ENCODE measurements at regions of chr11 and their contacts with region 1.

Region 1: GRCh38 chr11:83819933-83820549 is 533.9 kb upstream of the CCDC90B start:
- DNase-seq: peak; percentile 35
- ATAC-seq: peak; percentile 63; the same call in 1 of the 2 replicates
- H3K4me3 ChIP-seq: no peak overlapping the region
- H3K27ac ChIP-seq: no peak overlapping the region
- H3K4me1 ChIP-seq: peaks cover 0 to 4% of the 10 kb centered on the region in 2 experiments; a peak in 1 of 4 replicates
- H3K27me3 ChIP-seq: peaks cover 16% of the 10 kb centered on the region
- CTCF ChIP-seq: peak in 2 of 3 experiments; percentile 58 to 66; a peak in 4 of 6 replicates
- POLR2A ChIP-seq: no peak
- RAD21 ChIP-seq: peak; percentile 79

Region 2: DNA sequence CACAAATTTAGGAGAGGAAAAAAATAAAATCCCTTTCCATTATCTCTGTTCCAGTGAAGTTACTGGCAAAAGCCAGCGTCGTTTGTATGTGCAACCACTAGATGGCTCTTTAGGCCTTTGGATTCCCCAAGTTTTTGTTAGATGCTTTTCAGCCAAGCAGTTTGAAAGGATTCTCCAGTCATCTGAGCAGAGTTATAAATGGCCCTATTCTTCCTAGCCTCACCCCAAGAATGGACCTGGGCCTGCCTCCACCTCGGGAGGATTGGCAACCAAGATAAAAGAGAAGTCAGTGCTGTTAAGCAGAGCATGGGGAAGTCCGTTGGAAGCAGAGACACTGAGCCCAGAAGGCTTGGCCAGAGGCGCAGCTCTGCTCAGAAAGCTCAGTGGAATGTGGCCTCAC is 1101.7 kb before region 1 on chr11:
- CTCF ChIA-PET with region 1: interaction called, 8 read pairs
- POLR2A ChIA-PET with region 1: no interaction called
- RAD21 ChIA-PET with region 1: no interaction called
- intact Hi-C with region 1: loop called (anchors 2 kb)
- DNase-seq: peak; percentile 19
- ATAC-seq: peak; percentile 85
- H3K4me3 ChIP-seq: no peak overlapping the region
- H3K27ac ChIP-seq: no peak overlapping the region
- H3K4me1 ChIP-seq: no peaks in the 10 kb centered on the region
- H3K27me3 ChIP-seq: peaks cover 23% of the 10 kb centered on the region
- CTCF ChIP-seq: peak; percentile 58 to 74 (median 73); a peak in 5 of 6 replicates
- POLR2A ChIP-seq: no peak
- RAD21 ChIP-seq: peak; percentile 71

Region 3: GRCh38 chr11:82775736-82776346 is 1044.2 kb before region 1 on chr11:
- CTCF ChIA-PET with region 1: interaction called, 3 read pairs
- POLR2A ChIA-PET with region 1: no interaction called
- RAD21 ChIA-PET with region 1: no interaction called
- intact Hi-C with region 1: loop called (anchors 5 kb)
- DNase-seq: peak; percentile 36
- ATAC-seq: peak; percentile 100
- H3K4me3 ChIP-seq: peak overlapping the region in 1 of 2 experiments; percentile 2; a peak in 1 of 4 replicates
- H3K27ac ChIP-seq: no peak overlapping the region
- H3K4me1 ChIP-seq: no peaks in the 10 kb centered on the region
- H3K27me3 ChIP-seq: peaks cover 5% of the 10 kb centered on the region; the same call in 1 of the 2 replicates
- CTCF ChIP-seq: peak; percentile 71 to 95 (median 89); a peak in 5 of 6 replicates
- POLR2A ChIP-seq: no peak
- RAD21 ChIP-seq: peak; percentile 65

Region 4: DNA sequence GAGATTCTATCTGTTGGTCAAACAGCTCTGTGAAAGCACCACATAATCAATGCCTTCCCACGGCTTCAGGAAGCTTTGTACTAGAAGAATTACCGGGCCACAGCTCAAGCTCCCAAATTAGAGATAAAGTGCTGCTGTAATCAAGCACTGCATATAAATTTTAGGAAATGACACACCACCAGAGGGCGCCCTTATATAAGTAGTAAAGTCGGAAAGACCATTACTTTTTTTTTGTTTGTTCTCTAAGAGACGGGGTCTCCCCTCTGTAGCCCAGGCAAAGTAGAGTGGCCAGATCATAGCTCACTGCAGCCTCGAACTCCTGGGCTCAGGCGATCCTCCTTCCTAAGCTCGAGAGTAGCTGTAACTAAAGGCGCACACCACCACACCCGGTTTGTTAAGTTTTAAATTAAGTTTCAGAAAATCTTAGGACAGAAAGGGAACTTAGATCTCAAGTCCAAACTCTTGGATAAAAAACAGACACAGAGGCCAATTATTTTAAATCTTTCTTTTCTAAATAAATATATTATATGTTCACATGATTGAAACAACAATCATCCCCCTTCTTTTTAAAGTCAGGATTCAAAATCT is 952.5 kb before region 1 on chr11:
- CTCF ChIA-PET with region 1: interaction called, 7 read pairs
- POLR2A ChIA-PET with region 1: no interaction called
- RAD21 ChIA-PET with region 1: no interaction called
- intact Hi-C with region 1: loop called (anchors 2 kb)
- DNase-seq: peak; percentile 64
- ATAC-seq: peak; percentile 63
- H3K4me3 ChIP-seq: no peak overlapping the region
- H3K27ac ChIP-seq: no peak overlapping the region
- H3K4me1 ChIP-seq: peaks cover 0 to 3% of the 10 kb centered on the region in 2 experiments; a peak in 1 of 4 replicates
- H3K27me3 ChIP-seq: no peaks in the 10 kb centered on the region
- CTCF ChIP-seq: peak; percentile 55 to 80 (median 63); a peak in 5 of 6 replicates
- POLR2A ChIP-seq: no peak
- RAD21 ChIP-seq: peak; percentile 82

Region 5: DNA sequence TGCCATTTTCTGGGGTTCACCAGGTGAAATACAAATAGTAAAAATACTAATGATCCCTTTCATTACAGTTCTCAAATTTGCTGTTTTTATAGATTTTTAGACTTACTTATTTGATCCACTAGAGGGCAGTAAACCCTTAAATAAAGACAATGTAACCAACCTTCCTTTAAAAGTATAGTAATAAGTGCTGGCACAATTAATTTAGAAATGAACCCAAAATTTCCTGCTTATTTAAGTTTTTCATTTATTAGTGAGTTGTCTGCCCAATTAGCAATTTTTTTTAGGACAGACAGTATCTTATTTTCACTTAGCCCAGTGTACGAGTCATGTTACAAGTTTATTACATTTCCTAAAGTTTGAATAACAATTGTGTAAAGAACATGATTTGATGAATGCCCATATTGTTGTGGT is 913.8 kb before region 1 on chr11:
- CTCF ChIA-PET with region 1: no interaction called
- POLR2A ChIA-PET with region 1: no interaction called
- RAD21 ChIA-PET with region 1: no interaction called
- intact Hi-C with region 1: loop called (anchors 2 kb)
- DNase-seq: peak; percentile 15
- ATAC-seq: no peak
- H3K4me3 ChIP-seq: no peak overlapping the region
- H3K27ac ChIP-seq: no peak overlapping the region
- H3K4me1 ChIP-seq: peaks cover 6 to 10% of the 10 kb centered on the region in 2 experiments; a peak in 3 of 4 replicates
- H3K27me3 ChIP-seq: no peaks in the 10 kb centered on the region
- CTCF ChIP-seq: peak; percentile 32 to 71 (median 50); a peak in 4 of 6 replicates
- POLR2A ChIP-seq: no peak
- RAD21 ChIP-seq: peak; percentile 65

Region 6: GRCh38 chr11:83241291-83241946 is 578.6 kb before region 1 on chr11:
- CTCF ChIA-PET with region 1: interaction called, 3 read pairs
- POLR2A ChIA-PET with region 1: no interaction called
- RAD21 ChIA-PET with region 1: no interaction called
- intact Hi-C with region 1: loop called (anchors 5 kb)
- DNase-seq: peak; percentile 69
- ATAC-seq: peak; percentile 98
- H3K4me3 ChIP-seq: no peak overlapping the region
- H3K27ac ChIP-seq: no peak overlapping the region
- H3K4me1 ChIP-seq: no peaks in the 10 kb centered on the region
- H3K27me3 ChIP-seq: no peaks in the 10 kb centered on the region
- CTCF ChIP-seq: peak; percentile 52 to 73 (median 61)
- POLR2A ChIP-seq: no peak
- RAD21 ChIP-seq: peak; percentile 55; the same call in 1 of the 2 replicates

Region 7: DNA sequence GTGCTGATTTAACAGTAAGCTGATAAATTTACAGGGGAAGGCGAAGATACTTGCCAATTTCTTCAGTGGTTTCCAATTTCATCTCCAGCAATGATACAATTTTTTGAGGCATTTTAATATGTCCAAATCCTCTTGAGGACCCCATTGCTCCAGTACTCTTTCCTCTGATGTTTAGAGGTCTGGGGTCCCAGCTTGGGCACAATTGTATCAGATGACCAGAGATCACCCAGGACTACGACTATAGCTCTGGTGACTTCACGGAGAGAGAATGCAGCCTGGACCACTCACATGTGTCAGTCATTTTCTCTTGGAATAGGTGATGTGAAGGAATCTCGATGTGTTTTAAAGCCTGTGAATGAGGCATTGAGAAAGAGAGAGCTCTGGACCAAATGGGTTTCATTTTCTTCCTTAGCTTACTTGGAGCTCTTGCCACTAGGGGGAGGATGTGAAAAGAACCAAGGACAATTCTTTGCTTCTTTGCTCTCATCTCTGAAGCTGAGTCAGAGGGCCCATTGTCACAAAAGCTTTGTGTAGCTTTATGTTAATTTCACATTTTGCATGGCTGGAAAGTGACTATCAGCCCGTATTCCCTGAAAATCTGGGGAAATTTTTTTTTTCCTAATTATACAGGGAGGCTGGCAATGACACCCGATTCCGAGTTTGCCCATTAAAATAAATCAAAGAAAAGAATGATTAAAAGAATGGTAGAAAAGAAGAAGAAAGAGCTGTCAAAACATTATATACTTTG is 527.2 kb before region 1 on chr11:
- CTCF ChIA-PET with region 1: interaction called, 31 read pairs
- POLR2A ChIA-PET with region 1: no interaction called
- RAD21 ChIA-PET with region 1: interaction called in 1 of 2 experiments, 3 read pairs
- intact Hi-C with region 1: loop called (anchors 1 kb)
- DNase-seq: peak; percentile 39
- ATAC-seq: peak; percentile 86
- H3K4me3 ChIP-seq: no peak overlapping the region; a peak in 1 of 4 replicates
- H3K27ac ChIP-seq: no peak overlapping the region
- H3K4me1 ChIP-seq: 0 out of 4 replicates have a peak, but pooled peaks cover 0 to 3% of the 10 kb centered on the region in 2 experiments
- H3K27me3 ChIP-seq: peaks cover 11% of the 10 kb centered on the region
- CTCF ChIP-seq: peak; percentile 36 to 85 (median 75); a peak in 5 of 6 replicates
- POLR2A ChIP-seq: no peak
- RAD21 ChIP-seq: peak; percentile 45; the same call in 1 of the 2 replicates